H1 (cell line): ENCODE measurements at regions of chr2 and their contacts with region 1.

Region 1: GRCh38 chr2:96536445-96537065 is at the start of gene ARID5A:
- DNase-seq: peak; percentile 73 to 89
- H3K4me3 ChIP-seq: peak within 1 kb of the TSS; percentile 19 to 73 (median 53)
- H3K27ac ChIP-seq: no peak within 1 kb of the TSS
- H3K4me1 ChIP-seq: peaks cover 5 to 26% (median 20%) of the 10 kb centered on the region in 4 experiments
- H3K27me3 ChIP-seq: peaks cover 10 to 32% (median 26%) of the 10 kb centered on the region in 4 experiments; a peak in 6 of 7 replicates
- CTCF ChIP-seq: no peak
- EP300 ChIP-seq: no peak
- POLR2A ChIP-seq: peak in 1 of 2 experiments; percentile 44; a peak in 2 of 3 replicates
- RAD21 ChIP-seq: no peak
- total RNA-seq, gene ARID5A: 4.4 and 5.3 TPM in 2 replicates

Region 2: DNA sequence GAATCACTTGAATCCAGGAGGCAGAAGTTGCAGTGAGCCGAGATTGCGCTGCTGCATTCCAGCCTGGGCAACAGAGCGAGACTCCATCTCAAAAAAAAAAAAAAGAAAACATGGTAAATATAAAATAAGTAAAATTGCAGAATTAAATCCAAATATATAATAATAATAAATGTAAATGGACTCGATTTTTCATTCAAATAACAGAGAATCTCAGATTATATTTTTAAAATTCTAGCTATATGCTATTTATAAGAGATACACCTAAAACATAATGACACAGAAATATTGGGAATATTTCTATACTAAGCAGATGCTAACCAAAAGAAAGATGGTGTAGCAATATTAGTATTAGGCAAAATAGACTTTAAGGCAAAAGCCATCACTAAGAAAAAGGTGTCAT is 16.3 kb before region 1 on chr2:
- CTCF ChIA-PET with region 1: interaction called, 54 read pairs
- POLR2A ChIA-PET with region 1: no interaction called
- DNase-seq: no peak
- H3K4me3 ChIP-seq: no peak overlapping the region
- H3K27ac ChIP-seq: no peak overlapping the region
- H3K4me1 ChIP-seq: no peaks in the 10 kb centered on the region
- H3K27me3 ChIP-seq: no peaks in the 10 kb centered on the region; a peak in 1 of 7 replicates
- CTCF ChIP-seq: no peak
- EP300 ChIP-seq: no peak
- POLR2A ChIP-seq: no peak
- RAD21 ChIP-seq: no peak

Region 3: DNA sequence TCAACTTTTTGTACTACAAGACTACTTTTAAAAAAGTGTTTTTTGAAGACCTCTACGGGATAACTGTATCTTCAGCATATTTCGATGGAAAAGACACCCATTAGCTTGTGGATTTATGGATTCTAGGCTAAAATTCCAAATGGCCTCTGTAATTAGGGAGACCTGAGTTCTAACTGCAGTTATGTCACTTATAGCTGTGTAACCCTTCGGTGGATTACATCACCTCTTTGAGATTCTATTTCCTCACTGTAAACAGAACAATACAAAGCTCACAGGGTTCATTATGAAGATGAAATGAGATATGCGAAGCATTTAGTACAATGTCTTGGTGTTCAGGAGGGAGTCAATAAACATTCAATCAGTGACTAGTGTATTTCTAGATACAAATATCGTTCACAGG is 179.1 kb after region 1 on chr2:
- CTCF ChIA-PET with region 1: no interaction called
- POLR2A ChIA-PET with region 1: no interaction called
- DNase-seq: no peak
- H3K4me3 ChIP-seq: no peak overlapping the region
- H3K27ac ChIP-seq: no peak overlapping the region
- H3K4me1 ChIP-seq: no peaks in the 10 kb centered on the region
- H3K27me3 ChIP-seq: no peaks in the 10 kb centered on the region; a peak in 1 of 7 replicates
- CTCF ChIP-seq: no peak
- EP300 ChIP-seq: no peak
- POLR2A ChIP-seq: no peak
- RAD21 ChIP-seq: no peak